ENCODE measurements at regions of chr10 and their contacts with region 1.

Region 1: GRCh38 chr10:12129222-12130111 is at the start of gene SEC61A2:
- DNase-seq: peak; percentile 89 to 100 (median 95)
- ATAC-seq: peak; percentile 96
- H3K4me3 ChIP-seq: peak within 1 kb of the TSS; percentile 48
- H3K4me3 Mint-ChIP-seq: peak within 1 kb of the TSS; percentile 83 to 93 (median 89)
- H3K27ac ChIP-seq: peak within 1 kb of the TSS; percentile 85
- H3K27ac Mint-ChIP-seq: peak within 1 kb of the TSS; percentile 52 to 93 (median 83)
- H3K4me1 ChIP-seq: peaks cover 5 to 12% of the 10 kb centered on the region in 2 donors
- H3K4me1 Mint-ChIP-seq: peaks cover 12 to 35% (median 26%) of the 10 kb centered on the region in 7 donors
- H3K27me3 ChIP-seq: no peaks in the 10 kb centered on the region
- H3K27me3 Mint-ChIP-seq: no peaks in the 10 kb centered on the region
- total RNA-seq, gene SEC61A2: 7.8 to 15.7 (median 12.7) TPM

Region 2: GRCh38 chr10:11823122-11823988 is 306.1 kb before region 1 on chr10 and contains the start of gene PROSER2:
- CTCF ChIA-PET with region 1: no interaction called
- POLR2A ChIA-PET with region 1: no interaction called
- intact Hi-C with region 1: loop called in 1 of 2 experiments (anchors 10 kb)
- DNase-seq: peak; percentile 16 to 71 (median 45)
- ATAC-seq: peak; percentile 95
- H3K4me3 ChIP-seq: peak within 1 kb of the TSS; percentile 56
- H3K4me3 Mint-ChIP-seq: peak within 1 kb of the TSS; percentile 64 to 94 (median 83)
- H3K27ac ChIP-seq: peak within 1 kb of the TSS; percentile 29
- H3K27ac Mint-ChIP-seq: peak within 1 kb of the TSS in 4 of 9 donors; percentile 14 to 81 (median 58)
- H3K4me1 ChIP-seq: peaks cover 0 to 3% of the 10 kb centered on the region in 2 donors
- H3K4me1 Mint-ChIP-seq: peaks cover 0 to 27% (median 17%) of the 10 kb centered on the region in 7 donors
- H3K27me3 ChIP-seq: peaks cover 0 to 3% of the 10 kb centered on the region in 2 donors
- H3K27me3 Mint-ChIP-seq: peaks cover 26 to 60% (median 45%) of the 10 kb centered on the region in 5 donors
- total RNA-seq, gene PROSER2: 0.07 to 4.9 (median 1.8) TPM

Region 3: GRCh38 chr10:11863353-11864109 is 265.9 kb before region 1 on chr10:
- CTCF ChIA-PET with region 1: no interaction called
- POLR2A ChIA-PET with region 1: no interaction called
- intact Hi-C with region 1: loop called in 1 of 2 experiments (anchors 10 kb)
- DNase-seq: peak in 8 of 9 donors; percentile 33 to 79 (median 54)
- ATAC-seq: peak; percentile 90
- H3K4me3 ChIP-seq: peak overlapping the region; percentile 33
- H3K4me3 Mint-ChIP-seq: peak overlapping the region; percentile 57 to 93 (median 76)
- H3K27ac ChIP-seq: peak overlapping the region; percentile 50
- H3K27ac Mint-ChIP-seq: peak overlapping the region; percentile 74 to 95 (median 89)
- H3K4me1 ChIP-seq: peaks cover 14% of the 10 kb centered on the region in 2 donors
- H3K4me1 Mint-ChIP-seq: peaks cover 11 to 42% (median 29%) of the 10 kb centered on the region in 7 donors
- H3K27me3 ChIP-seq: no peaks in the 10 kb centered on the region
- H3K27me3 Mint-ChIP-seq: peaks cover 0 to 78% (median 0%) of the 10 kb centered on the region in 5 donors

Region 4: GRCh38 chr10:12042797-12043651 is 86.4 kb before region 1 on chr10 and contains the start of gene UPF2:
- CTCF ChIA-PET with region 1: no interaction called
- POLR2A ChIA-PET with region 1: interaction called, 5 read pairs
- intact Hi-C with region 1: loop called (anchors 1 kb)
- DNase-seq: peak; percentile 95 to 98 (median 97)
- ATAC-seq: peak; percentile 93
- H3K4me3 ChIP-seq: peak within 1 kb of the TSS; percentile 83
- H3K4me3 Mint-ChIP-seq: peak within 1 kb of the TSS; percentile 87 to 100 (median 95)
- H3K27ac ChIP-seq: peak within 1 kb of the TSS; percentile 92
- H3K27ac Mint-ChIP-seq: peak within 1 kb of the TSS; percentile 98 to 100 (median 99)
- H3K4me1 ChIP-seq: peaks cover 10 to 16% of the 10 kb centered on the region in 2 donors
- H3K4me1 Mint-ChIP-seq: peaks cover 13 to 47% (median 40%) of the 10 kb centered on the region in 7 donors
- H3K27me3 ChIP-seq: no peaks in the 10 kb centered on the region
- H3K27me3 Mint-ChIP-seq: peaks cover 0 to 3% (median 0%) of the 10 kb centered on the region in 5 donors
- total RNA-seq, gene UPF2: 27.2 to 40.5 (median 36.3) TPM

Region 5: DNA sequence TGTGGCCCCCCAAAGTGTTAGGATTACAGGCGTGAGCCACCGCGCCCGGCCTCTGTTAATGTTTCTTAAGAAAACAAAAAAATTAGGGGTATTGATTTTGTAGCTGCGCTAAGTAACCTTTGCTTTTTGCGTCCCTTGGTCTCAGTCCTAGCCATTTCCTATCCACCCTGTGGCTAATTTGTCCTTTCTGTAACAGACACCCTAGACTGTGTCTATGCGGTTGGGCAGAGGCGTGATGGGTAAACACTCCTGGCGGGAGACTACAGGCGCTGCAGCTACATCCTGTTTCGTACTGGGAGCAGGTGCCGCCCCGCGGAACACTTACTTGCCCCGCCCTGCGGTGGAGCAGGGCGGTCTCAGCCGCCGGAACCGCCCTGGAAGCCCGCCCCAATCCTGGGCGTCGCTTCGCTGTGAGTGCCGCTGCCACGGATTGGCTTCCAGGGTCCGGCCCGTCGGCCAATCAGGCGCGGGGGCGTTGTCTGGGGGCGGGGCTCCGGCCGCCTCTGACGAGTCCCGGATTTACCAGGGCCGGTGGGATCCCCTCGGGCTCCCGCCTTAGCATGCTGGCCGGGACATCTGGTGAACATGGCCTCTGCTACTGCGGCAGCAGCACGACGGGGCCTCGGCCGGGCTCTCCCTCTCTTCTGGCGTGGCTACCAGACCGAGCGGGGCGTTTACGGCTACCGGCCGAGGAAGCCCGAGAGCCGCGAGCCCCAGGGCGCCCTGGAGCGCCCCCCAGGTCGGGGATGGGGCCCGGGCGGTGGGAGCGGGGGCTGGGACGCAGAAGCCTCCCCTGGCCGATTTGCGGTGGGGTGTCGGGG is 60.8 kb before region 1 on chr10 and contains the start of gene DHTKD1:
- CTCF ChIA-PET with region 1: no interaction called
- POLR2A ChIA-PET with region 1: no interaction called
- intact Hi-C with region 1: loop called (anchors 1 kb)
- DNase-seq: peak; percentile 96 to 100 (median 98)
- ATAC-seq: peak; percentile 99
- H3K4me3 ChIP-seq: peak within 1 kb of the TSS; percentile 85
- H3K4me3 Mint-ChIP-seq: peak within 1 kb of the TSS; percentile 84 to 92 (median 88)
- H3K27ac ChIP-seq: peak within 1 kb of the TSS; percentile 85
- H3K27ac Mint-ChIP-seq: peak within 1 kb of the TSS; percentile 85 to 99 (median 95)
- H3K4me1 ChIP-seq: peaks cover 6 to 15% of the 10 kb centered on the region in 2 donors
- H3K4me1 Mint-ChIP-seq: peaks cover 12 to 27% (median 20%) of the 10 kb centered on the region in 7 donors
- H3K27me3 ChIP-seq: no peaks in the 10 kb centered on the region
- H3K27me3 Mint-ChIP-seq: no peaks in the 10 kb centered on the region
- total RNA-seq, gene DHTKD1: 10.8 to 25.9 (median 12.5) TPM

Region 6: DNA sequence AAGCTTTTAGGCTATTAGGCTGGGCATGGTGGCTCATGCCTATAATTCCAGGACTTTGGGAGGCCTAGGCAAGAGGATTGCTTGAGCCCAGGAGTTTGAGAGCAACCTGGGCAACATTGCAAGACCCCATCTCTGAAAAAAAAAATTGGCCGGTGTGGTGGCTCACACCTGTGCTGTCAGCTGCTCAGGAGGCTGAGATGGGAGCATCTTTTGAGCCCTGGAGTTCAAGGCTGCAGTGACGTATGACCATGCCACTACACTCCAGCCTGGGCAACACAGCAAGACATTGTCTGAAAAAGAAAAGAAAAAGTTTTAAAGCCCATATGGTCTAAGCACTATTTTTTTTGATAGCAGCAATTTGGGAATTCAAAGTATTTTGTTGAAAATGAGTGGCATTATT is 15.8 kb before region 1 on chr10:
- CTCF ChIA-PET with region 1: interaction called, 4 read pairs
- POLR2A ChIA-PET with region 1: interaction called, 3 read pairs
- intact Hi-C with region 1: loop called (anchors 2 kb)
- DNase-seq: no peak
- ATAC-seq: no peak
- H3K4me3 ChIP-seq: no peak overlapping the region
- H3K4me3 Mint-ChIP-seq: no peak overlapping the region
- H3K27ac ChIP-seq: peak overlapping the region; percentile 29
- H3K27ac Mint-ChIP-seq: peak overlapping the region in 5 of 9 donors; percentile 54 to 87 (median 77)
- H3K4me1 ChIP-seq: peaks cover 0 to 15% of the 10 kb centered on the region in 2 donors
- H3K4me1 Mint-ChIP-seq: peaks cover 8 to 32% (median 20%) of the 10 kb centered on the region in 7 donors
- H3K27me3 ChIP-seq: no peaks in the 10 kb centered on the region
- H3K27me3 Mint-ChIP-seq: no peaks in the 10 kb centered on the region

Region 7: DNA sequence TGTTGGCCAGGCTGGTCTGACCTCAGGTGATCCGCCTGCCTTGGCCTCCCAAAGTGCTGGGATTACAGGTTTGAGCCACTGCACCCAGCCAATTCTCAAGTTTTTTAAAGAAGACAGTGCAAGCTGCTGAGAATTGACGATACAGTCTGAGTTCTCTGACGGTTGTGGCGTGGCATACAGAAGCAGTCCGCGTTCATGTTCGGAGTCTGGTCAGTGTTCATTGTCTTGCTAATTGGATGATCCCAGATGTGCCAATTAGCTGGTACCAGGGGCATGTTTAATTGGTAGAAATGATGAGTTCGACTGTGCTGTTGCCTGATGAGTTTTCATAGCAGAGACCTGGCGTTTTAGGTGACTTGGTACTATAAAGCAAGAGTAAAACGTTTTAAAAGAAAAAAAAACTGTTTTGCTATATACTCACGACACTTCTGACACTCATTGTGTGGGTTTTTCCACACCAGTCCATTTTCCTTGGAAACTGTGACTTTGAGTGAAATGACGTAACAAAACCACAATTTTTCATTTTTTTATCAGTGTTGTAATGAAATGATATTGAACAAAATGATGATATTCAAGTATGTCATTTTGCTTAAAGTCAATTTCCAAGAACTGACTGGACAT is 252.2 kb after region 1 on chr10:
- CTCF ChIA-PET with region 1: no interaction called
- POLR2A ChIA-PET with region 1: no interaction called
- intact Hi-C with region 1: no loop called
- DNase-seq: no peak
- ATAC-seq: no peak
- H3K4me3 ChIP-seq: no peak overlapping the region
- H3K4me3 Mint-ChIP-seq: no peak overlapping the region
- H3K27ac ChIP-seq: no peak overlapping the region
- H3K27ac Mint-ChIP-seq: no peak overlapping the region
- H3K4me1 ChIP-seq: no peaks in the 10 kb centered on the region
- H3K4me1 Mint-ChIP-seq: peaks cover 0 to 24% (median 16%) of the 10 kb centered on the region in 7 donors
- H3K27me3 ChIP-seq: no peaks in the 10 kb centered on the region
- H3K27me3 Mint-ChIP-seq: no peaks in the 10 kb centered on the region

Measured in naive thymus-derived CD4-positive, alpha-beta T cell (primary cell).